ENCODE measurements at regions of chr19 and their contacts with region 1.

Region 1: GRCh38 chr19:41883821-41884733 is 1.1 kb downstream of the ARHGEF1 start:
- DNase-seq: peak; percentile 89 to 98 (median 96)
- H3K4me3 ChIP-seq: peak overlapping the region; percentile 61 to 99 (median 90)
- H3K27ac ChIP-seq: peak overlapping the region in 54 of 59 donors; percentile 3 to 91 (median 80)
- H3K27me3 ChIP-seq: no peaks in the 10 kb centered on the region
- CTCF ChIP-seq: peak in 54 of 56 donors; percentile 17 to 76 (median 54)

Region 2: DNA sequence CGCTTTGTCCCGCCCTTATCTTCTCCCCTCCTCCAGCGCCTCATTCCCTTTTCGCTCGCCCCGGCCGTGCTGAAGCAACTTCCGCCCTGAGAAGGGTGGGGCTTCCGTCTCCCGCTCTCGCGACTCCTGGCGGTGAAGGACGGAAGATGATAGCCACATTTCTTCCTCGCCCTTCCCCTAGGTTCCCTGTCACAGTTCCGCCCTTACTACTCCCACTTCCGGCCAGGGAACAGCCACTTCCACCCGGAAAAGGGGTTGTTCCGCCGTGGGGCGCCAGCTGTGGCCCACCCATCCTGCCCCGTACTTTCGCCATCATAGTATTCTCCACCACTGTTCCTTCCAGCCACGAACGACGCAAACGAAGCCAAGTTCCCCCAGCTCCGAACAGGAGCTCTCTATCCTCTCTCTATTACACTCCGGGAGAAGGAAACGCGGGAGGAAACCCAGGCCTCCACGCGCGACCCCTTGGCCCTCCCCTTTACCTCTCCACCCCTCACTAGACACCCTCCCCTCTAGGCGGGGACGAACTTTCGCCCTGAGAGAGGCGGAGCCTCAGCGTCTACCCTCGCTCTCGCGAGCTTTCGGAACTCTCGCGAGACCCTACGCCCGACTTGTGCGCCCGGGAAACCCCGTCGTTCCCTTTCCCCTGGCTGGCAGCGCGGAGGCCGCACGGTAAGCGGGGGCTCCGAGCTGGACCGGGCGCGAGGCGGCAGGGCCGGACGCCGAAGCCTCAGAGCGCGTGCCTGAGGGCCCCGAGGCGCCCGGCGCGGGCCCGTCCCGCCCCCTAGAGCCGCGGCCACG is 24.3 kb before region 1 on chr19 and contains the start of gene RPS19:
- intact Hi-C with region 1: loop called (anchors 1 to 2 kb)
- DNase-seq: peak; percentile 97 to 99 (median 98)
- H3K4me3 ChIP-seq: peak within 1 kb of the TSS; percentile 51 to 99 (median 90)
- H3K27ac ChIP-seq: peak within 1 kb of the TSS; percentile 79 to 99 (median 96)
- H3K27me3 ChIP-seq: no peaks in the 10 kb centered on the region
- CTCF ChIP-seq: peak; percentile 44 to 89 (median 78)
- total RNA-seq, gene RPS19: 344 to 718 (median 462) TPM

Region 3: GRCh38 chr19:42032431-42032830 is 148.4 kb after region 1 on chr19:
- intact Hi-C with region 1: loop called in 1 of 2 experiments (anchors 10 kb)
- DNase-seq: no peak
- H3K4me3 ChIP-seq: no peak overlapping the region
- H3K27ac ChIP-seq: peak overlapping the region in 8 of 59 donors; percentile 1 to 37 (median 18)
- H3K27me3 ChIP-seq: no peaks in the 10 kb centered on the region
- CTCF ChIP-seq: no peak

Region 4: GRCh38 chr19:42386974-42387707 is 503.1 kb after region 1 on chr19:
- intact Hi-C with region 1: no loop called
- DNase-seq: peak in 5 of 10 donors; percentile 18 to 61 (median 33)
- H3K4me3 ChIP-seq: peak overlapping the region; percentile 18 to 71 (median 51)
- H3K27ac ChIP-seq: peak overlapping the region in 3 of 59 donors; percentile 13 to 39 (median 18)
- H3K27me3 ChIP-seq: peaks cover 0 to 31% (median 5%) of the 10 kb centered on the region in 45 donors
- CTCF ChIP-seq: peak in 52 of 56 donors; percentile 9 to 67 (median 47)